Naive thymus-derived CD4-positive, alpha-beta T cell (primary cell): ENCODE measurements at regions of chr2 and their contacts with region 1.

Region 1: GRCh38 chr2:15577071-15577735 is 14.5 kb upstream of the DDX1 start:
- DNase-seq: peak; percentile 67 to 85 (median 81)
- ATAC-seq: peak; percentile 98
- H3K4me3 ChIP-seq: no peak overlapping the region
- H3K4me3 Mint-ChIP-seq: no peak overlapping the region
- H3K27ac ChIP-seq: no peak overlapping the region
- H3K27ac Mint-ChIP-seq: no peak overlapping the region
- H3K4me1 ChIP-seq: no peaks in the 10 kb centered on the region
- H3K4me1 Mint-ChIP-seq: no peaks in the 10 kb centered on the region
- H3K27me3 ChIP-seq: no peaks in the 10 kb centered on the region
- H3K27me3 Mint-ChIP-seq: peaks cover 0 to 5% (median 0%) of the 10 kb centered on the region in 5 donors

Region 2: DNA sequence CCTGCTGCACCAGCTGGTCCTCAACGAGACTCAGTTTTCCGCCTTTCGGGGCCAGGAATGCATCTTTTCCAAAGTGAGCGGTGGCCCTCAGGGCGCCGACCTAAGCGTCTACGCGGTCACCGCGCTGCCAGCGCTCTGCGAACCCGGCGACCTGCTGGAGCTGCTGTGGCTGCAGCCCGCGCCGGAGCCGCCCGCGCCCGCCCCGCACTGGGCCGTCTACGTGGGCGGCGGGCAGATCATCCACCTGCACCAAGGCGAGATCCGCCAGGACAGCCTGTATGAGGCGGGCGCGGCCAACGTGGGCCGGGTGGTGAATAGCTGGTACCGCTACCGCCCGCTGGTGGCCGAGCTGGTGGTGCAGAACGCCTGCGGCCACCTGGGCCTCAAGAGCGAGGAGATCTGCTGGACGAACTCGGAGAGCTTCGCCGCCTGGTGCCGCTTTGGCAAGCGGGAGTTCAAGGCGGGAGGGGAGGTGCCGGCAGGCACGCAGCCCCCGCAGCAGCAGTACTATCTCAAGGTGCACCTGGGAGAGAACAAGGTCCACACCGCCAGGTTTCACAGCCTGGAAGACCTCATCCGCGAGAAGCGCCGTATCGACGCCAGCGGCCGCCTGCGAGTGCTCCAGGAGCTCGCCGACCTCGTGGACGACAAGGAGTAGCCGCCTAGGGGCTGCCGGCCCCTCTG is 942.9 kb before region 1 on chr2:
- CTCF ChIA-PET with region 1: no interaction called
- POLR2A ChIA-PET with region 1: no interaction called
- intact Hi-C with region 1: loop called in 1 of 2 experiments (anchors 10 kb)
- DNase-seq: peak in 1 of 9 donors; percentile 23
- ATAC-seq: no peak
- H3K4me3 ChIP-seq: no peak overlapping the region
- H3K4me3 Mint-ChIP-seq: no peak overlapping the region
- H3K27ac ChIP-seq: no peak overlapping the region
- H3K27ac Mint-ChIP-seq: no peak overlapping the region
- H3K4me1 ChIP-seq: no peaks in the 10 kb centered on the region
- H3K4me1 Mint-ChIP-seq: peaks cover 0 to 5% (median 0%) of the 10 kb centered on the region in 7 donors
- H3K27me3 ChIP-seq: no peaks in the 10 kb centered on the region
- H3K27me3 Mint-ChIP-seq: peaks cover 52 to 62% (median 54%) of the 10 kb centered on the region in 5 donors

Region 3: GRCh38 chr2:15038366-15039364 is 538.5 kb before region 1 on chr2:
- CTCF ChIA-PET with region 1: interaction called, 3 read pairs
- POLR2A ChIA-PET with region 1: no interaction called
- intact Hi-C with region 1: loop called in 1 of 2 experiments (anchors 5 kb)
- DNase-seq: no peak
- ATAC-seq: no peak
- H3K4me3 ChIP-seq: no peak overlapping the region
- H3K4me3 Mint-ChIP-seq: no peak overlapping the region
- H3K27ac ChIP-seq: no peak overlapping the region
- H3K27ac Mint-ChIP-seq: no peak overlapping the region
- H3K4me1 ChIP-seq: no peaks in the 10 kb centered on the region
- H3K4me1 Mint-ChIP-seq: peaks cover 0 to 3% (median 0%) of the 10 kb centered on the region in 7 donors
- H3K27me3 ChIP-seq: no peaks in the 10 kb centered on the region
- H3K27me3 Mint-ChIP-seq: peaks cover 0 to 17% (median 13%) of the 10 kb centered on the region in 5 donors

Region 4: GRCh38 chr2:15378148-15378908 is 198.9 kb before region 1 on chr2:
- CTCF ChIA-PET with region 1: no interaction called
- POLR2A ChIA-PET with region 1: no interaction called
- intact Hi-C with region 1: loop called in 1 of 2 experiments (anchors 10 kb)
- DNase-seq: no peak
- ATAC-seq: no peak
- H3K4me3 ChIP-seq: no peak overlapping the region
- H3K4me3 Mint-ChIP-seq: peak overlapping the region in 1 of 10 donors; percentile 51
- H3K27ac ChIP-seq: no peak overlapping the region
- H3K27ac Mint-ChIP-seq: peak overlapping the region in 1 of 9 donors; percentile 46
- H3K4me1 ChIP-seq: no peaks in the 10 kb centered on the region
- H3K4me1 Mint-ChIP-seq: peaks cover 0 to 16% (median 0%) of the 10 kb centered on the region in 7 donors
- H3K27me3 ChIP-seq: no peaks in the 10 kb centered on the region
- H3K27me3 Mint-ChIP-seq: no peaks in the 10 kb centered on the region

Region 5: DNA sequence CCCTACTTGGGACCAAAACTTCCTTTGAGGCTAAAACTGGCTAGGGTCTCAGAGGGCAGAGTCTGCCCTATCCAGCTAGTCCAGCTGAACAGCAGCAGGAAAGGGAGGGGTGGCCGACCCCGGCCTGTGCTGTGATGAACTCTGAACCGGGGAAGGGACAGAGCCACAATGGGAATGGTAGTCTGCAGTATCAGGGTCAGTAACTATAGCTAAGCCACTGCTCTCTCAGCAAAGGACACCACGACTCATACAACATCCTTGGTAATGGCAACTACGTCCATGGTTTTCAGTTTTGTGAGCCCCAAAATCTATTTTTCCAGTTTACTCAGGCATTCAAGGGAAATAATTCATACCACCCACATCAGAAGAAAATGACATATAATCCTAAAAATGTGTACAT is 91.3 kb before region 1 on chr2:
- CTCF ChIA-PET with region 1: no interaction called
- POLR2A ChIA-PET with region 1: no interaction called
- intact Hi-C with region 1: loop called in 1 of 2 experiments (anchors 10 kb)
- DNase-seq: no peak
- ATAC-seq: no peak
- H3K4me3 ChIP-seq: no peak overlapping the region
- H3K4me3 Mint-ChIP-seq: no peak overlapping the region
- H3K27ac ChIP-seq: no peak overlapping the region
- H3K27ac Mint-ChIP-seq: no peak overlapping the region
- H3K4me1 ChIP-seq: no peaks in the 10 kb centered on the region
- H3K4me1 Mint-ChIP-seq: peaks cover 0 to 4% (median 0%) of the 10 kb centered on the region in 7 donors
- H3K27me3 ChIP-seq: no peaks in the 10 kb centered on the region
- H3K27me3 Mint-ChIP-seq: no peaks in the 10 kb centered on the region

Region 6: GRCh38 chr2:15546297-15547098 is 30.7 kb before region 1 on chr2:
- CTCF ChIA-PET with region 1: interaction called, 5 read pairs
- POLR2A ChIA-PET with region 1: no interaction called
- intact Hi-C with region 1: loop called in 1 of 2 experiments (anchors 1 kb)
- DNase-seq: no peak
- ATAC-seq: no peak
- H3K4me3 ChIP-seq: no peak overlapping the region
- H3K4me3 Mint-ChIP-seq: no peak overlapping the region
- H3K27ac ChIP-seq: no peak overlapping the region
- H3K27ac Mint-ChIP-seq: no peak overlapping the region
- H3K4me1 ChIP-seq: no peaks in the 10 kb centered on the region
- H3K4me1 Mint-ChIP-seq: peaks cover 0 to 12% (median 0%) of the 10 kb centered on the region in 7 donors
- H3K27me3 ChIP-seq: no peaks in the 10 kb centered on the region
- H3K27me3 Mint-ChIP-seq: no peaks in the 10 kb centered on the region